ENCODE measurements at regions of chr2 and their contacts with region 1.

Region 1: GRCh38 chr2:150449871-150450270 is 37.6 kb downstream of the RND3 start:
- DNase-seq: peak; percentile 32
- H3K27ac ChIP-seq: no peak overlapping the region
- CTCF ChIP-seq: no peak

Region 2: GRCh38 chr2:150204451-150204850 is 245.4 kb before region 1 on chr2:
- CTCF ChIA-PET with region 1: interaction called, 10 read pairs
- POLR2A ChIA-PET with region 1: no interaction called
- DNase-seq: no peak
- H3K27ac ChIP-seq: no peak overlapping the region
- CTCF ChIP-seq: no peak

Region 3: GRCh38 chr2:150924878-150925277 is 475.0 kb after region 1 on chr2:
- CTCF ChIA-PET with region 1: no interaction called
- POLR2A ChIA-PET with region 1: no interaction called
- DNase-seq: no peak
- H3K27ac ChIP-seq: no peak overlapping the region
- CTCF ChIP-seq: no peak